GM18951 (cell line): ENCODE measurements at regions of chr5 and their contacts with region 1.

Region 1: GRCh38 chr5:142922223-142922952 is 152.2 kb downstream of the ARHGAP26 start:
- POLR2A ChIP-seq: no peak

Region 2: GRCh38 chr5:143968011-143968878 is 1045.9 kb after region 1 on chr5:
- in situ Hi-C with region 1: loop called (anchors 25 kb)
- POLR2A ChIP-seq: no peak

Region 3: DNA sequence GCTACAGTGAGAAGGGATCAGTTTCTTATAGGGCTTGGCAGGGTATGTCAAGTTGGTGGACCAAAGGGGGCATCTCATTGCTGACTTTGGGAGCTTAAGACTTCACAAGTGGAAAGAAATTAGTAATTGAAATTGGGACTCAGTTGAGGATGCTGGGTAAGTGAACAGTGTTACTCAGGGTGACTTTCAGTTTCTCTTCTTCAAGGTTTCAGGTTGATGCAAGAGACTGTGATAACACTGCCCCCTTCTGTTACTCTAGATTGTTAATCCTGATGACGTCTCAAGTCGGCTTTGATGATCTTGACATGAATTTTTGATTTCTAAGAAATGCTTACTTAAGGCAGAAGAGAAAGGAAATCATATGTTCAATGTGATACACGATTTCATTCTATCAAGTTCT is 1269.6 kb after region 1 on chr5:
- in situ Hi-C with region 1: loop called (anchors 25 kb)
- POLR2A ChIP-seq: no peak